ENCODE measurements at regions of chr15 and their contacts with region 1.

Region 1: DNA sequence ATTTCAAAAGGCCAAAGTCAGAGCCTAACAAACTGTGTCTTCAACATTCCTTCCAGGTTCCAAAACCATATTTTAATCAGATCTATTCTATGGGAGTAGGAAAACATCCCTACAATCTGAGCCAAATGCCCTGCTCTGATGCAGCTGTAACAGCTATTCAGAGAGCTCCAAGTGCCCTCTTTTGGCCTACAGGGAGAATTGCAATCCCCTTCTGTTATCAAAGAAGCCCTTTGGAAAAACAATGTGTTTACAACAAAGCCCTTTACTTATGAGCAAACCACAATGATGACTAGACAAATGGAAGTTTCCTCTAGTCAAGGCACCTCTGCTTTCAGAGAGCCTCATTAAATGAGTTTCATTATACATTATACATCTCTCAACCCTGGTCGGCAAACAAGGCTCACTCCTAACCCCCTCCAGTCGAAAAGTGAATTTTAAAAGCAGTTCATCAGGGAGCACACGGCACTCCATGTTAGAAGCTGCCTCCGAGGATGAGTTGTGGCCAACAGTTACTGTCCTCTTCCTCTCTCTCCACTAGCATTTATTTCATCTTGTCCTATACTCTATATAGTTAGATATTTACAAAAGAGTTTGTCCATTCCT is 42.6 kb upstream of the TMCO5A start:
- DNase-seq: peak; percentile 81
- H3K4me3 ChIP-seq: no peak overlapping the region
- H3K27ac ChIP-seq: no peak overlapping the region
- H3K4me1 ChIP-seq: peaks cover 21% of the 10 kb centered on the region
- H3K27me3 ChIP-seq: no peaks in the 10 kb centered on the region

Region 2: GRCh38 chr15:36501063-36501678 is 1390.7 kb before region 1 on chr15:
- in situ Hi-C with region 1: loop called (anchors 25 kb)
- DNase-seq: peak; percentile 77
- H3K4me3 ChIP-seq: peak overlapping the region; percentile 6; the same call in 1 of the 2 replicates
- H3K27ac ChIP-seq: no peak overlapping the region
- H3K4me1 ChIP-seq: peaks cover 15% of the 10 kb centered on the region; the same call in 1 of the 2 replicates
- H3K27me3 ChIP-seq: no peaks in the 10 kb centered on the region

Region 3: GRCh38 chr15:37134699-37135131 is 757.2 kb before region 1 on chr15:
- in situ Hi-C with region 1: loop called (anchors 25 kb)
- DNase-seq: peak; percentile 75
- H3K4me3 ChIP-seq: no peak overlapping the region
- H3K27ac ChIP-seq: no peak overlapping the region
- H3K4me1 ChIP-seq: peaks cover 18% of the 10 kb centered on the region
- H3K27me3 ChIP-seq: no peaks in the 10 kb centered on the region

Region 4: DNA sequence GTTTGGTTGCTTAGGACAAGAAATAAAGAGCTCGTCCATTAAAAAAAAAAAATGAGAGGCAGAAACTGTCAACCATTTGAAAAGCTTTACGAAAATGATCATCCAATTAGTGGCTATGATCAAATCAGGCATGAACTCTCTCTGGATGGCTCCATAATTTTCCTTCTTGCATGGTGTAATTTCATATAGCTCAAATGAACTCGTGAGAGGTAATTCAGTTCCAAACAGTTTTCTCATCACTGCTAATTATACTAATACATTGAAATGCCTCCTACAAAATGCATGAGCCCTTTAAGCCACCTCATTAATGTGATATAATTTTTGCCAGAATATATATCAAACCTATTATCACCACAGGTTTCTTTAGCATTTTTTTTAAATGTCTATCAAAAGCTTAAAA is 552.0 kb before region 1 on chr15:
- in situ Hi-C with region 1: no loop called
- DNase-seq: no peak
- H3K4me3 ChIP-seq: no peak overlapping the region
- H3K27ac ChIP-seq: no peak overlapping the region
- H3K4me1 ChIP-seq: no peaks in the 10 kb centered on the region
- H3K27me3 ChIP-seq: no peaks in the 10 kb centered on the region

Measured in GM23248 (cell line).